ENCODE measurements at regions of chr18 and their contacts with region 1.

Region 1: DNA sequence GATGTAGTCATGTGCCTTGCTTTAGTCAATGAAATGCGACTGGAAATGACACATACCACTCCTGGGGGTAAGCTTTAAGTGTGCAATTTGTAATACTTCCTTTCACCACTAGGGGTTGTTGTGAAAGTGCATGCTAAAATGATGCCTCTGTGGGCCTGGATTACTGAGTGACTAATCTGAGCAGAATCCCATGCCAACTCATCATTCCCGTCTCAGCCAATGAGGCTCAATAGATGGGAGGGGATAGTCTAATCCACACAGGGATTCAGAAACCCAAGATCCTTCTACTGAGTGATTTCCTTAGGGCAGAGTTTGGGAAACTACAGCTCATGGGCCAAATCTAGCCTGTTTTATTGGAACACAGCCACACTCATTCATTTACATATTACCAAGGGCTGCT is 54.0 kb downstream of the HRH4 start:
- DNase-seq: peak; percentile 84
- ATAC-seq: peak; percentile 96
- H3K4me3 ChIP-seq: no peak overlapping the region
- H3K27ac ChIP-seq: no peak overlapping the region
- H3K4me1 ChIP-seq: peaks cover 0 to 4% of the 10 kb centered on the region in 2 experiments; a peak in 1 of 4 replicates
- H3K27me3 ChIP-seq: no peaks in the 10 kb centered on the region
- CTCF ChIP-seq: peak; percentile 24 to 80 (median 74); a peak in 5 of 6 replicates
- POLR2A ChIP-seq: no peak
- RAD21 ChIP-seq: no peak

Region 2: DNA sequence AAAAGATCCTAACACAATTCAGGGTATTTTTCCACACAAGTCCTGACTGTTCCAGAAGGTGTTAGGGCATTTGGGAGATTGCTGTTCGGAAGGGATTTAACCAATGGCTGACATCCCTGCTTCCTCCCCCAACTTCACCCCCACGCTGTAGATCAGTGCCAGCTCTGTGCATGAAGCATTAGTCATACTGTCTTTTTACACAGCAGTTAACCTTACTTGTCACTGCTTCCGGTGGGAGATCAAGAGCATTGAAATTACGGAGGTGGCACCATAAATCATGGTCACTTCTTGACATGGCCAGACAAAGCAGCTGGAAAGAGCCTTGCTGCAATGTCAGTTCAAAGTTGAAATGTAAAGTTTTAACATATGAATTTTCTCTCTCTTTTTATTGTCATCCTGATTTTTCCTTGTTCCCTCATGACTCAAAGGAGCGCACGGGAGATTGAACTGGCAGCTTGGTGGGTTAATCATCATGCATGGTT is 16.2 kb after region 1 on chr18:
- CTCF ChIA-PET with region 1: interaction called, 16 read pairs
- POLR2A ChIA-PET with region 1: no interaction called
- RAD21 ChIA-PET with region 1: no interaction called
- intact Hi-C with region 1: no loop called
- DNase-seq: peak; percentile 42
- ATAC-seq: peak; percentile 89
- H3K4me3 ChIP-seq: 0 out of 4 replicates have a peak overlapping the region, but pooled peaks of 1 of the 2 experiments have one; percentile 8
- H3K27ac ChIP-seq: no peak overlapping the region
- H3K4me1 ChIP-seq: peaks cover 11% of the 10 kb centered on the region in 2 experiments
- H3K27me3 ChIP-seq: no peaks in the 10 kb centered on the region
- CTCF ChIP-seq: no peak
- POLR2A ChIP-seq: no peak
- RAD21 ChIP-seq: no peak

Measured in HCT116 (cell line).